Astrocyte of the cerebellum (primary cell): ENCODE measurements at regions of chr1 and their contacts with region 1.

Region 1: GRCh38 chr1:181746224-181746623 is 262.9 kb downstream of the CACNA1E start:
- DNase-seq: no peak
- H3K4me3 ChIP-seq: no peak overlapping the region
- CTCF ChIP-seq: no peak

Region 2: DNA sequence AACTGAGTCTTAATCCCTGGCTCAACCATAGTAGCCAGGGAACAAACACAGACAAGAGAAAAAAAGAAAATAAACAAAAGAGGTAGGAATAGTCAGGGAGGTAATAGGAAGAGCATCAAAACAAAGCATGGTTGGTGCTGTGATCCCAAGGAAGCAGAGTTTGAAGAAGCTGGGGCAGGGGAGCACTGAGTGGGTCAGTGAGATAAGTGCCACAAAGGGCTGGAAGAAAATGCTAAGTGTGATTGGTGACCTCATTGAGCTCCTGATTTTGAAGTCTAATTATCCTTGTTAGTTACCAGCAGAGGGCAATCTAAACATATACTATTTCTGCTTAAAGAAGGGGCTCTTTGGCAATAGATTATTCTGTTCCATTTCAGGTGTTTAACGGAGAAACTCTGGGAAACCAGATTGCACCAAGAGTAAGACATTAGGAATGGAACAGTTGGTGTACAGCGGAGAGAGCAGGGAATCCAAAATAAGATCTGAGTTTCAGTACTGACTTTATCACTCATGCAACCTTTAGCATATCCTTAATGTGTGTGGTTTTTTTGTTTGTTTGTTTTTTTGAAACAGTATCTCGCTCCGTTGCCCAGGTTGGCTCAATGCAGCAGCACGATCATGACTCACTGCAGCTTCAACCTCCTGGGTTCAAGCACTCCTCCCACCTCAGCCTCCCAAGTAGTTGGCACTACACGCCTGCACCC is 864.3 kb before region 1 on chr1:
- in situ Hi-C with region 1: no loop called
- DNase-seq: peak; percentile 33
- H3K4me3 ChIP-seq: no peak overlapping the region
- CTCF ChIP-seq: peak; percentile 38

Region 3: GRCh38 chr1:181704546-181704945 is 41.7 kb before region 1 on chr1:
- in situ Hi-C with region 1: loop called (anchors 5 kb)
- DNase-seq: peak; percentile 6
- H3K4me3 ChIP-seq: no peak overlapping the region
- CTCF ChIP-seq: no peak